MCF 10A (cell line): ENCODE measurements at regions of chr16 and their contacts with region 1.

Region 1: DNA sequence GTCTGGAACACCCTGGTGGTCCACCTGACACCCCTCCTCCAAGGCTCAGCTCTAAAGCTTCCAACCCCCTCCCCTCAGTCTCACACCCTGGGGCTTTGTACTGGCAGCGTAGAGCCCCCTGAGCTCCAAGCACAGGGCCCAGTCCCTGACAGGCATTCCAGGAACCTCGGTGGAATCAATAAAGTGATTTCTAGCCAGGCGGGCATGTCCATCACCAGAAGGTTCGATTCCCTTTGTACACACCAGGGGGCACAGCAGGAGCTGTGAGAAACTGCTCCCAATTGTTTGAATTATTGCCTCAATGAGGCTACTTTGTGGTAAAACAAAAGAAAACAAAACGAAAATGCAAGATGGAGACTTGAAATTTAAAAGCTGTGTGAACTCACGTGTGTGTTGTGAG is 51.8 kb downstream of the SMPD3 start:
- DNase-seq: peak; percentile 63
- H3K4me3 Mint-ChIP-seq: no peak overlapping the region
- H3K27ac Mint-ChIP-seq: no peak overlapping the region
- H3K4me1 Mint-ChIP-seq: no peaks in the 10 kb centered on the region
- H3K27me3 Mint-ChIP-seq: peaks cover 21% of the 10 kb centered on the region
- CTCF ChIP-seq: peak; percentile 59

Region 2: DNA sequence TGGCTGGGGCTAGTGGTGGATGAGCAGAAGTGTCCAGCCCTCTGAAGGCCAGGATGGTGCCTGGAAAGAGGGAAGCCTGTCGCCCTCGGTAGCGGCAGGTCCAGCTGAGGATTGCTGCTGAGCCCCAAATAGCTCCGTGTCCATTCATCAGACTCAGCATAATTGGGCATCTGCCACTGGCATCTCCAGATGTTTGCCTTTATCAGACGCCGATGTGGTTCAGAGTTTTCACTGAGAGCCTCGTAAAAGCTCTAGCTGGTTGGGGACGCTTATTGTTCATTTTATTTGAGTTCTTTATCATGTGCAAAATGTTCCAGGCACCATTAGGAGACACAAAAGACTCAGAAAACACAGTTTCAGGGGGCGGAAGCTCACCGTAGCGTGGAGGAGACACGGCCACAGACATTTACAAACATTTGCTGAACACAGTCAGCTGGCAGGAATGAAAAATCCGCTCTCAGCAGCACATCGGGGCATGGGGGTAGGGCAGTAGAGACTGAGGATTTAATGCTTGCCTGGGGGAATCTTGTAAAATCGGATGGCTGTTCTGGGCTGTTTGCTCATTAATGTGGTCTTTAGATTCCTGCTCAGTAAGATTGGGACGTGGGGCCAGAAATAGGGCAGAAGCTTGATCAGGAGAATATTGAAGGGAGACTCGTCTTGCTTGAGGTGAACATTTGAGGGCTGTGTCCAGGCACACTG is 10.1 kb after region 1 on chr16:
- CTCF ChIA-PET with region 1: interaction called, 14 read pairs
- POLR2A ChIA-PET with region 1: interaction called, 3 read pairs
- intact Hi-C with region 1: no loop called
- DNase-seq: no peak
- H3K4me3 Mint-ChIP-seq: no peak overlapping the region
- H3K27ac Mint-ChIP-seq: no peak overlapping the region
- H3K4me1 Mint-ChIP-seq: peaks cover 8% of the 10 kb centered on the region
- H3K27me3 Mint-ChIP-seq: peaks cover 17% of the 10 kb centered on the region
- CTCF ChIP-seq: no peak

Region 3: DNA sequence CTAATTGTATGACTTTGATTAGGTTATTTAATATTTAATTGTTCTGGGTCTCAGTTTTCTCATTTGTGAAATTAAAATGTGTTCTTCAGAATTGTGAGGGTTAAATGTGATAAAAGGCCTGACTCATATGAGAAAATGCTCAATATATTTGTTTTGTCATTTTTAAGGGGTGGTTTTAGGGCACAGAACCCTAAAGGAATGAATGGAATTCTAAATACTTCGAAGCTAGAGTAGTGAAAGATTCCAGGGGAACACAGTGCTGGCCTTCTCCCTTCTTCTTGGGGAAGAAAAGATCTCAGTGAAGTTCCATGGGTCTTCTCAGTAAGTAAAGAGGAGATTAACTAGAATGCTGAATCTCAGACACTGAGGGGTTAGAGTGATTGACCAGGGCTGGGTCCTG is 55.7 kb after region 1 on chr16:
- CTCF ChIA-PET with region 1: no interaction called
- POLR2A ChIA-PET with region 1: no interaction called
- intact Hi-C with region 1: no loop called
- DNase-seq: no peak
- H3K4me3 Mint-ChIP-seq: no peak overlapping the region
- H3K27ac Mint-ChIP-seq: no peak overlapping the region
- H3K4me1 Mint-ChIP-seq: no peaks in the 10 kb centered on the region
- H3K27me3 Mint-ChIP-seq: peaks cover 31% of the 10 kb centered on the region
- CTCF ChIP-seq: no peak

Region 4: DNA sequence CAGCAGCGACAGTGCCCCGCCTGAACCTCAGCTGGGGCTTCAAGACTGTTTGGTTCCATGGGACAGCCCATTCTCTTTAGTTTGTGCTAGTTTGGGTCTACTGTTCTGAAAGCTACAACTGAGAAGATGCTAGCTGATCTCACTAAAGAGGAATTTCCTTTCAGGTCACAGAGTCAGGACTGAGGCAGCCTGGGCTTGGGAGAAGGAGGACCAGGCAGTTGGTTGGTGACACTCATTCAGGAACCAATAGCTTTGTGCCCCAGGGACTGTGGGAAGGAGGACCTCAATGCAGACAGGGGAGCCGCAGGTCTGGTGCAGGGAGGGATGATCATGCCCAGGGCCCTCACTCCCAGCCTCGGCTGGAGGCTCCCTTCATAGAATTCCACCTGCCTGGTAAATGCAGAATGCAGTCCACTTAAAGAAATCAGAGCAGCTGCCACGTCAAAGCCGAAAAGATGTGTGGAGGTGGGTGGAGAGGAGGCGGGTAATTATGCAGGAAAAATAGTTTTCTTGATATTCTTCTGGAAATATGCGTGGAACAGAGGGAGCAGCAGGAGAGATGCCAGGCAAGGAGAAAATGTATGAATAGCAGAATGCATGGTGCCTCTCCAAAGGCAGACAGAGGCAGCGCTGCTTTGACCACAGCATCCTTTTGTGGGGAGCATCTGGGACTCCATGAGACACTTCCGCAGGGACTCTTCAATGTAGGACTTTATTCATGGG is 110.0 kb after region 1 on chr16:
- CTCF ChIA-PET with region 1: interaction called, 23 read pairs
- POLR2A ChIA-PET with region 1: no interaction called
- intact Hi-C with region 1: loop called (anchors 1 kb)
- DNase-seq: no peak
- H3K4me3 Mint-ChIP-seq: no peak overlapping the region
- H3K27ac Mint-ChIP-seq: no peak overlapping the region
- H3K4me1 Mint-ChIP-seq: no peaks in the 10 kb centered on the region
- H3K27me3 Mint-ChIP-seq: peaks cover 45% of the 10 kb centered on the region
- CTCF ChIP-seq: no peak

Region 5: GRCh38 chr16:68512183-68512582 is 115.7 kb after region 1 on chr16:
- CTCF ChIA-PET with region 1: interaction called, 23 read pairs
- POLR2A ChIA-PET with region 1: no interaction called
- intact Hi-C with region 1: loop called (anchors 1 kb)
- DNase-seq: no peak
- H3K4me3 Mint-ChIP-seq: no peak overlapping the region
- H3K27ac Mint-ChIP-seq: no peak overlapping the region
- H3K4me1 Mint-ChIP-seq: no peaks in the 10 kb centered on the region
- H3K27me3 Mint-ChIP-seq: peaks cover 28% of the 10 kb centered on the region
- CTCF ChIP-seq: no peak